ENCODE measurements at regions of chr4 and their contacts with region 1.

Region 1: DNA sequence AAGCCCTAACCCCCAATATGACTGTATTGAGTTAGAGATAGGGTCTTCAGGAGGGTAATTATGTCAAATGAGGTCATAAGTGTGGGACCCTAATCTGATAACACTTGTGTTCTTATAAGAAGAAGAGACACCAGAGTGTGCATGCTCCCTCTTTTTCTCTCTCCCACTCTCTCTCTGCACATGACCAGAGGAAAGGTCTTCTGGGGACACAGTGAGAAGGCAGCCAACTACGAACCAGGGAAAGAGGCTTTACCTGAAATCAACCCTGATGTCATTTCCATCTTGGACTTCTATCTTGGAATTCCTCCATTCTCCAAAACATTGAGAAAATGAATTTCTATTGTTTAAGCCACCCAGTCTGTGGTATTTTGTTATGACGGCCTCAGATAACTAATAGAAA is 97.2 kb upstream of the MAD2L1 start:
- DNase-seq: no peak
- ATAC-seq: no peak
- H3K4me3 ChIP-seq: no peak overlapping the region
- H3K27ac ChIP-seq: no peak overlapping the region
- H3K4me1 ChIP-seq: no peaks in the 10 kb centered on the region
- H3K27me3 ChIP-seq: no peaks in the 10 kb centered on the region
- CTCF ChIP-seq: no peak
- POLR2A ChIP-seq: no peak
- RAD21 ChIP-seq: no peak

Region 2: GRCh38 chr4:120018786-120019185 is 145.1 kb before region 1 on chr4:
- CTCF ChIA-PET with region 1: no interaction called
- POLR2A ChIA-PET with region 1: no interaction called
- dilution Hi-C with region 1: no loop called
- in situ Hi-C with region 1: no loop called
- intact Hi-C with region 1: no loop called
- DNase-seq: peak; percentile 57
- ATAC-seq: peak; percentile 40
- H3K4me3 ChIP-seq: no peak overlapping the region
- H3K27ac ChIP-seq: no peak overlapping the region
- H3K4me1 ChIP-seq: peaks cover 2% of the 10 kb centered on the region; the same call in 1 of the 2 replicates
- H3K27me3 ChIP-seq: no peaks in the 10 kb centered on the region
- CTCF ChIP-seq: no peak
- POLR2A ChIP-seq: no peak
- RAD21 ChIP-seq: no peak

Region 3: DNA sequence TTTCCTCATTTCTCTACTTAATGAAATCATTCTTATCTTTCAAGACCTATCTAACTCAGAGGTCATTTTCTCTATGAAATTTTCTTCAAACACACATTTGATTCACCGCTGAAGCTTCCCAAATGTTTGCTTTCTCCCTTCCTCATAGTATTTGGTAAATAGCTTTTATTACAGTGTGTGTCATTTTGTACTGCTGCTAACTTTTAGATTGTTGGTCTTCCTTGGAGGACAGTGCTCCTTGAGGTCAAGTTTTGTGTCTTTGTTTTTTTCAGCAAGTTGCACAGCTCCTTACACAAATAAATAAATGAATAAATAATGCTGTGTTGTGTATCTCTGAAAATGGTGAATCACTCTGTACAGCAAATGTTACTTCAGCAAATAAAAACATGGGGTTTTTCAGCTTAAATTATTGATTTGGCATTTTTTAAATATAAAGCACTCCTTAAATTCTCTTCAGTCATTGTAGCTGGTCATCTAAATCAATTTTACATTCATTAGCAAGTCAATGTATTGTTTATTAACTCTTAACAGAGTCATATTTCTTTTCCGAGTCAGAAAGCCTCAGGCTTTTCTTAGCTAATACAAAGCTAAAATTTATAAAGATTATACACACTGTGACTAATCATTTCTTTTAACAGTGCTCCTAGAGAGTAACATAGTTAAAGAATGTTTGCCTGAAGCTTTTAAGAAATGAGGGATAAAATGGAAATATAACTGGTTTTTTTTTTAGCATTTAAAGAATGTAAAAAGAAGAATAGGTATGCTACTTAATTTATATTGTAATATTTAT is 67.2 kb before region 1 on chr4:
- CTCF ChIA-PET with region 1: no interaction called
- POLR2A ChIA-PET with region 1: no interaction called
- dilution Hi-C with region 1: no loop called
- in situ Hi-C with region 1: no loop called
- intact Hi-C with region 1: no loop called
- DNase-seq: peak; percentile 5
- ATAC-seq: peak; percentile 78
- H3K4me3 ChIP-seq: no peak overlapping the region
- H3K27ac ChIP-seq: no peak overlapping the region
- H3K4me1 ChIP-seq: no peaks in the 10 kb centered on the region
- H3K27me3 ChIP-seq: no peaks in the 10 kb centered on the region; the same call in 1 of the 2 replicates
- CTCF ChIP-seq: no peak
- POLR2A ChIP-seq: no peak
- RAD21 ChIP-seq: no peak

Region 4: DNA sequence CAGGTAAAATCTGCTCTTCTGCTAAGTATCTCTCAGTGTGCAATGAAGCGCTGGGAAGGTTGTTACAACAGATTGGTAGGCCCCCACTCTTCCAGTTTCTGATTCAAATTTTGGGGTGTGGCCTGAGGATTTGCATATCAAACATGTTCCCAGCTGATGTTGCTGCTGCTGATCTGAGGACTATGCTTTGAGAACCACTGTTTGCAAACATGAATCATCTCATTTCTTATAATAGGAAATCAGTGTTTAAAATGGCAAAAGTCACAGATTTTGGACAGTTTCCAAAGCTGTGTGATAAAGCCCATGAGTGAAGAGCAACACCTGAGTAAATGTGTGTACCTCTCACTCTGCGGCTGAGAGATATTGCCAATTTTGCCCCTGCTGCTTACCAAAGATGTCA is 944.7 kb after region 1 on chr4:
- CTCF ChIA-PET with region 1: no interaction called
- POLR2A ChIA-PET with region 1: no interaction called
- dilution Hi-C with region 1: no loop called
- in situ Hi-C with region 1: loop called (anchors 10 kb)
- intact Hi-C with region 1: no loop called
- DNase-seq: no peak
- ATAC-seq: no peak
- H3K4me3 ChIP-seq: no peak overlapping the region
- H3K27ac ChIP-seq: no peak overlapping the region
- H3K4me1 ChIP-seq: no peaks in the 10 kb centered on the region
- H3K27me3 ChIP-seq: peaks cover 2% of the 10 kb centered on the region; the same call in 1 of the 2 replicates
- CTCF ChIP-seq: no peak
- POLR2A ChIP-seq: no peak
- RAD21 ChIP-seq: no peak